ENCODE measurements at regions of chrX and their contacts with region 1.

Region 1: GRCh38 chrX:54182864-54183608 is at the start of gene FAM120C:
- DNase-seq: peak; percentile 34 to 92 (median 56)

Region 2: DNA sequence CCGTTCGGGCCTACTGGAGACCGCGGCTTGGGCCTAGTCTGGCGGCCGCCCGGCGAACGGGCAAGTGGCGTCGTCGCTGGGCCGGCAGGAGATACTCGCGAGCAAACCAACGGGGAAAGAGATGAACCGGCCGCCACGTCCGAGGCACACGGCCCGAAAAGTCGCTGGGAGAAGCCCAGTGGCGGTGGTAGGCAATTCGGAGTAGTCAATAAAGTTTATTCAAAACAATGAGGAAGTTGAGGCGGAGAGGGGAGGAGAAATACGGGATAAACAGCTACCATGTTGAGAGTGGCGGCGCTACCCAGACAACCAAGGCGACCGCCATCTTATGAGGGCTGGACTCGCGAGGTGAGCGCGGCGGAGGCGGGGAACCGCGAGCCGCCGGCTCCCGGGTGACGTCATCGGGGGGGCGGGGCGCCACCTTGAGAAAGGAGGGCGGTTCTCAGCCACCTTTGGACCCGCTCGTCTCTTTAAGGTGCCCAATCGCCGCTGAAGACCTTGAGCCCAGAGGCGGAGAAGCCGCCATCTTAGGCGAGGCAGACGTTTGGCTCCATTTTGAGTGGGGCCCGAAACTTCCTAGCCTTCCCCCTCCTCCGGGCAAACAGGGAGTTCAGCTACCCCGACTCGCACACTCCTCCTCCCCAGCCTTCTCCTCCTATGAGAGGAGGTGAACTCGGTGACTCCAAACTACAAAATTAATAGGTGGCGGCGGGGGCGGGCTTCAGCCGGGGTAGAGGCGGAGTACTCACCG is 138.7 kb before region 1 on chrX and contains the start of gene PHF8:
- intact Hi-C with region 1: loop called (anchors 10 kb)
- DNase-seq: peak; percentile 78 to 98 (median 87)

Region 3: DNA sequence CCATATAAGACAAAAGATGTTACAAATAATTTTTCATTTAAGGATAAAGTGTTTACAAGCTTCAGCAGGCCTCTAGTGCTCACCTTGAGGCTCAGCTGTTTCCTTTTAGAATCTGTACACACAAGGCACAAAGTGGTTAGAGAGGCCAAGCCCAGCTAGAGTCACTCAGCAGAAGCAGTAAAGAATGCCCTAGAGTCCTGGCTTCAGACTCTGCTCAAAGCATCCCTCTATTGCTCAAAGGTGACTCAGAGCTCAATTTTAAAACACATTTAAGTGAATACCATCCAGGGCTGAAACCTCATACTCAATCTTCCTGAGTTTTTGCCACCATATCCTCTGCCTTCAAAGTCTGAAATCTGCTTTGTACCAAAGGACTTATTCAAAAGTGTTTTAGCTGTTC is 116.2 kb before region 1 on chrX:
- intact Hi-C with region 1: no loop called
- DNase-seq: no peak

Region 4: DNA sequence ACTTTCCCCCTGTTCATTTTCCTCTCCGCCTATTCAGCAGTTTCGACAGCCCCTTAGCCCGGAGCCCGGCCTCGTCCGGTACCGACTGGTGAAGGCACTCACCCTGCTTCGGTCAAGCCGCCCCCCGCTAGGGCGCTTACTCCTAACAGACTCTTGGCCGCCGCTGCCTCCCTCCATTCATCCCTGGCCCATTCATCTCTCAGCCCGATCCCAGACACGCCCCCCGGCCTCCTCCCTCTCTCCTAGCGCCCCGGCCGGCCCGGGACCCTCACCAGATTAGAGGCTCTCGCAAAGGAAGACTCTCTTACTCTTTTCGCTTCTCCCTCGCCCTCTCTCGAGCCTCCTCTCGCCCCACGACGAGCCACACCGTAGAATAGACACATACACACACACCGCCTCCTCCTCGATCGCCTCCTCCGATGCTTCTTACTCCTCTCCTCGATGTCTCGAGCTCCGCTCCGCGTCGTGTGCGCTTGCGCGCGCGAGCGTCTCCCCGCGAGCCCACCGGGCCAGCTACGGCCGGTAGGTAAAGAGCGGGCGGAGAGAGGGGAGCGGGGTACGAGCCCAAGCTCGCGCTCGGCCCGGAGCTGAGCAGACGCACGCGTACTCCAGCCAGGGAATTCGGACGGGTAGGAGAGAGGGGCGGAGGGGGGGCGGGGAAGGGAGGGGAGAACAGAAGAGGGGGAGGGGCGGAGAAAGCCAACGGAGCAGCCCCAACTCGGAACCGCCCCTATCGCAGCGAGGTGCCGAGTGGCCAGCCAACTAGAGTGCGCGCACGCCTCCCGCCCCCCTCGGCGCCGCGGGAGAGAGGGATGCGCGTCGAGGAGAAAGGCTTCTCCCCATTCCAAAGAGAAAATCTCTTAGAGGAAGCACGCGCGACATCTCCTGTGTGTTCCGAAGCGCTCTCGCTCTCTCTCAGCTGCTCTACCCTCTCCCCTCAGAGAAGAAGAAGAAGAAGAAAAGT is 174.7 kb after region 1 on chrX and contains the start of gene WNK3:
- intact Hi-C with region 1: loop called (anchors 2 kb)
- DNase-seq: peak; percentile 51 to 95 (median 76)

Region 5: GRCh38 chrX:54602563-54602962 is 419.5 kb after region 1 on chrX:
- intact Hi-C with region 1: no loop called
- DNase-seq: no peak